PC-9 (cell line): ENCODE measurements at regions of chr2 and their contacts with region 1.

Region 1: DNA sequence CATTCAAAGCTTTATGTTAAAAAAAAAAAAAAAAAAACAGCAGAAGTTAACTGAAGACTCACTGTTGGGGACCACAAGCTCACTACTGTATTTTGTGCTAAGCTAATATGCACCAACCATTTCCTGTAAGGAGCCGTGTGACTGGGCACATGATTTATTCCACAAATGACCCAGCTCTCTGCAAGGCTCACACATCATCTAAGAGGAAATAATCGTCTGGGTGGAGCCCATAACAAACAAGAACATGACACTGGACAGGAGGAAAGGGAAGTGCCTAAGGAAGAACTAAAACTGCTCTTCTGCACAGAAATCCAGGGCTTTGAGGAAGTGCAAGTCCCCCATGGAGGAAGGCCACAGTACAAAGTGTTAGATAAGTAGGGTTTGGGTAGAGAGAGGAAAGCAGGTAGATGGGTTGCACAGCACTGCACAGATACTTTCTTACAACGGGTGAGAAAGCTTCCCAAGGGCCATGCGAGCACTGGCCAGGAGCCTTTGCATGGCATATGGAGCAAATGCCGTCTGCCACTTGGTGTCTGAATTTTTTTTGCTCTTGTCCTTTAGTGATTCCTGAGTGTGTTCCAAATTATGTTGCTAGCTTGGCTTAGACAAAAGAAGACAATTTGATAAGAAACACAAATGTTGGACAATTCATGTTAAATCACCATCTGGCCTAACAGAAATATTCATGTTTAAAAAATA is 24.4 kb downstream of the NFE2L2 start:
- DNase-seq: peak in 1 of 2 experiments; percentile 47
- H3K4me3 ChIP-seq: no peak overlapping the region
- H3K27ac ChIP-seq: peak overlapping the region; percentile 97
- H3K4me1 ChIP-seq: peaks cover 56% of the 10 kb centered on the region
- H3K27me3 ChIP-seq: no peaks in the 10 kb centered on the region
- CTCF ChIP-seq: no peak

Region 2: GRCh38 chr2:175929850-175930249 is 1310.2 kb before region 1 on chr2:
- CTCF ChIA-PET with region 1: no interaction called
- POLR2A ChIA-PET with region 1: no interaction called
- intact Hi-C with region 1: loop called (anchors 5 kb)
- DNase-seq: peak; percentile 14 to 39
- H3K4me3 ChIP-seq: no peak overlapping the region
- H3K27ac ChIP-seq: no peak overlapping the region
- H3K4me1 ChIP-seq: peaks cover 18% of the 10 kb centered on the region
- H3K27me3 ChIP-seq: no peaks in the 10 kb centered on the region
- CTCF ChIP-seq: no peak

Region 3: GRCh38 chr2:176126929-176127773 is 1112.9 kb before region 1 on chr2:
- CTCF ChIA-PET with region 1: interaction called, 12 read pairs
- POLR2A ChIA-PET with region 1: no interaction called
- intact Hi-C with region 1: no loop called
- DNase-seq: peak; percentile 43 to 67
- H3K4me3 ChIP-seq: 0 out of 2 replicates have a peak overlapping the region, but pooled peaks have one; percentile 3
- H3K27ac ChIP-seq: no peak overlapping the region
- H3K4me1 ChIP-seq: no peaks in the 10 kb centered on the region
- H3K27me3 ChIP-seq: peaks cover 52% of the 10 kb centered on the region
- CTCF ChIP-seq: peak; percentile 100

Region 4: GRCh38 chr2:176709149-176709951 is 530.7 kb before region 1 on chr2:
- CTCF ChIA-PET with region 1: no interaction called
- POLR2A ChIA-PET with region 1: no interaction called
- intact Hi-C with region 1: no loop called
- DNase-seq: no peak
- H3K4me3 ChIP-seq: no peak overlapping the region
- H3K27ac ChIP-seq: no peak overlapping the region
- H3K4me1 ChIP-seq: no peaks in the 10 kb centered on the region
- H3K27me3 ChIP-seq: peaks cover 43% of the 10 kb centered on the region
- CTCF ChIP-seq: no peak

Region 5: DNA sequence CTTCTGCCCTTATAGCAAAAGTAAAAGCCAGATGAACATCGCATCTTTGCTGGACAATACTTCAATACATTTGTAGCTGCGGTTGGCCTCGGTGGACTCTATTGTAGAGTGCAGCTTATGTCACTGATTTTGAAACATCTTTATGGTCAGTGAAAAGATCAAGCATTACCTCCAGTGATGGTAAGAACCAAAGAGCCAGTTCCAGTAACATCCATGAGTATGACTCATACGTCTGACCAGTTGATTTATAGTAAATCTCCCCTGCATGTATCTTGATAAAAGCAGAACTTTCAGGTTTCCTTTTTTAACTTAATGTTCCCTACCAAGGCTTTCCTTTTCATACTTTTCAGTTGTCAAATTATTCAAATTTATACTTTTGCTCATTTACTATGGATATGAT is 146.7 kb before region 1 on chr2:
- CTCF ChIA-PET with region 1: no interaction called
- POLR2A ChIA-PET with region 1: no interaction called
- intact Hi-C with region 1: no loop called
- DNase-seq: no peak
- H3K4me3 ChIP-seq: no peak overlapping the region
- H3K27ac ChIP-seq: no peak overlapping the region
- H3K4me1 ChIP-seq: no peaks in the 10 kb centered on the region
- H3K27me3 ChIP-seq: peaks cover 18% of the 10 kb centered on the region; the same call in 1 of the 2 replicates
- CTCF ChIP-seq: no peak

Region 6: DNA sequence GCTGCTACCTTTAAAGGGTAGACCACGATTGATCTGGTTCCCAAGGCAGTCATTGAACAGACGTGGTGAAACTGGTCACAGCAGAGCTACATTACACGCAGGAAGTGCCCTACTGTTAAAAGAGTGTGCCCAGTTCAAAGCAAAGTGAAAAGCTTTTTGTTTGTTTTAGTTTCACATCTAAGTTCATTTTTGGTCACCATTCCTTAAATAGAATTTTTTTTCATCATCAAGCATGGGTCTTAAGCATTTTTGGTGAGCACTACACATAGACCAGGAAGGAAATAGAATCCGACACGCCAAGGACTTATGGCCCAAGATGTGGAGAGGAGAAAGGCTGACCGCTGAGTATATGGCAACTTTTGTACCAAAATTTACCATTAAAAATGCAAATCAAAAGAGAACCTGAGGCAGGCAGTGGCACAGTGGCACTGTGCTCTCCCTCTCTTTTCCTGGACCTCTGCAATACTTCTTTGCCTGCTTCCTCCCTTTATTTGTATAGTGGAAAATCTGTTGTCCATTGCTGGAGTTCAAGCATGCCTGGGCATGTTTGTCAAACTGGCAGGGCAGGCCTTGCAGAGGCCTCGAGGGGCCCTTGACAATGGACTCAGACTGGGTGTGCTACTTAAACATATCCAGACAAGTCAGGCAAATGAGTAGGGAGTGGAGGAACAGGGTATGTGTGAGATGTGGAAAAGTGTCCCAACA is 70.1 kb before region 1 on chr2:
- CTCF ChIA-PET with region 1: interaction called, 22 read pairs
- POLR2A ChIA-PET with region 1: no interaction called
- intact Hi-C with region 1: loop called (anchors 1 kb)
- DNase-seq: peak; percentile 68 to 92
- H3K4me3 ChIP-seq: no peak overlapping the region
- H3K27ac ChIP-seq: no peak overlapping the region
- H3K4me1 ChIP-seq: peaks cover 72% of the 10 kb centered on the region
- H3K27me3 ChIP-seq: no peaks in the 10 kb centered on the region
- CTCF ChIP-seq: no peak

Region 7: DNA sequence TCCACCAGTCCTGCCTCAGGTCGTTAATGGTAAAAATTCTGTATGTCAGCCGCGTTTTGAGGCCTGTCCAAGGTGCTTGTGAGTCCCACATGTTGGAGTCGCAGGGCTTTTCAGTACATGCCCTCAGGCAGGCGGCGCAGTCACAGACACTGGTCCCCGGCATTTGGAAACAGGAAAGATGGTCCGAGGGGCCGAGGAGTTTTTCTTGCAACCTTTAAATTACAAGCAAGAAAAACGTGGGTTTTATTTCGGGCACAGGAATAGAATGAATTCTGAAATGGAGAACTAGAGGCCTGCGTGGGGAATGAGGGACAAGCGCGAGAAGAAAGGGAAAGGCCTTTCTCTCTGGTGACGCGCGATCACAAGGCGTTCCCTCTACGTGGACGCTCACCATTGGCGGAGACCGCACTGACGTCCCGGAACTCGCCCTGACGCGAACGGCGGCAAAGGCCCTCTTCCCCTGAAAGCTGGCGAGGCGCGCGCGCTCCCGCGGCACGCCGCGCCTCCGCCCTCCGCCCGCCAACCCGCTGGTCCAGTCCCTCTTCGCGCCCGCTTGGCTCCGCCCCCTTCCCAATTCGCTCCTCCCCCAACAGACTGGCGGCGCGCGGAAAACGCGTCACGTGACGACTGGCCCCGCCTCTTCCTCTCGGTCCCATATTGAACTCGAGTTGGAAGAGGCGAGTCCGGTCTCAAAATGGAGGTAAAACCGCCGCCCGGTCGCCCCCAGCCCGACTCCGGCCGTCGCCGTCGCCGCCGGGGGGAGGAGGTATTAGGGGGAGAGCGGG is 27.8 kb before region 1 on chr2 and contains the start of gene HNRNPA3:
- CTCF ChIA-PET with region 1: no interaction called
- POLR2A ChIA-PET with region 1: no interaction called
- intact Hi-C with region 1: loop called (anchors 1 kb)
- DNase-seq: peak; percentile 98 to 100
- H3K4me3 ChIP-seq: peak within 1 kb of the TSS; percentile 76
- H3K27ac ChIP-seq: peak within 1 kb of the TSS; percentile 97
- H3K4me1 ChIP-seq: peaks cover 30% of the 10 kb centered on the region
- H3K27me3 ChIP-seq: no peaks in the 10 kb centered on the region
- CTCF ChIP-seq: peak; percentile 27; the same call in 1 of the 2 replicates
- total RNA-seq, gene HNRNPA3: 245 and 290 TPM in 2 replicates

Region 8: DNA sequence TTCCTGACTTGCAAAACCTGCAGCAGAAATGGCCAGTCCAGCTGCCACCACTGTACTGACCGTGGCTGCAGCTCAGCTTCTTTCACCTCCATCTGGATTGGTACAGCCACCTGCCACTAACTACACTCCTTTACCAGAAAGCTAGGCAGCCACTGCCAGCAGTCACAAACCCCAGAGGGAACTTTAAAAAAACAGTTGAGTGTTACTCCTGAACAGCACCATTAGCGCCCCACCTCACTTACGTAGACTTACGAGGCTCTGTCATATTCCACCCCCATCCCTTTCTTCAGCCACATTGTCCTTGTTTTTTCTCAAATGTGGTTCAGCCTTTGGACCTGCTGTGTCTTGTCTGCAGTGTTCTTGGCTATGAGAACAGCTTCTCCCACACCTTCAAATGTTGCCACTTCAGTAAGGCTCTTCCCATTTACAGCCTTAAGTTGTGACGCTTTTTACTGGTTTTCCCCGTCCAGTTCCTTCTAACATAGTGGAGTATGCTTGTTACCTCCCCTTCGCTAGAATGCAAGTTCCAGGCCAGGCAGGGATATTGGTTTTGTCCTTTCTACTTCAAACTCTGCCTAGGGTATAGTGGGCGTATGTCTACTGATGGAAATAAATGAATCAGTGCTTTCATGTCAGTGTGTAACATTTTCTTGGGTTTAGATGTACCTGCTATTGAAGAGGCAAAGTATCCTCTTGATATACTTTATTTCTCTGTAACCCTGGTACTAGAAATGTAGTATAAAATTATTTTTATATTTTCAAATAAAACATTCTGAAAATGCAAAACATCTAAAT is 10.4 kb before region 1 on chr2:
- CTCF ChIA-PET with region 1: no interaction called
- POLR2A ChIA-PET with region 1: no interaction called
- intact Hi-C with region 1: loop called (anchors 1 kb)
- DNase-seq: no peak
- H3K4me3 ChIP-seq: no peak overlapping the region
- H3K27ac ChIP-seq: no peak overlapping the region
- H3K4me1 ChIP-seq: no peaks in the 10 kb centered on the region
- H3K27me3 ChIP-seq: no peaks in the 10 kb centered on the region
- CTCF ChIP-seq: no peak

Region 9: DNA sequence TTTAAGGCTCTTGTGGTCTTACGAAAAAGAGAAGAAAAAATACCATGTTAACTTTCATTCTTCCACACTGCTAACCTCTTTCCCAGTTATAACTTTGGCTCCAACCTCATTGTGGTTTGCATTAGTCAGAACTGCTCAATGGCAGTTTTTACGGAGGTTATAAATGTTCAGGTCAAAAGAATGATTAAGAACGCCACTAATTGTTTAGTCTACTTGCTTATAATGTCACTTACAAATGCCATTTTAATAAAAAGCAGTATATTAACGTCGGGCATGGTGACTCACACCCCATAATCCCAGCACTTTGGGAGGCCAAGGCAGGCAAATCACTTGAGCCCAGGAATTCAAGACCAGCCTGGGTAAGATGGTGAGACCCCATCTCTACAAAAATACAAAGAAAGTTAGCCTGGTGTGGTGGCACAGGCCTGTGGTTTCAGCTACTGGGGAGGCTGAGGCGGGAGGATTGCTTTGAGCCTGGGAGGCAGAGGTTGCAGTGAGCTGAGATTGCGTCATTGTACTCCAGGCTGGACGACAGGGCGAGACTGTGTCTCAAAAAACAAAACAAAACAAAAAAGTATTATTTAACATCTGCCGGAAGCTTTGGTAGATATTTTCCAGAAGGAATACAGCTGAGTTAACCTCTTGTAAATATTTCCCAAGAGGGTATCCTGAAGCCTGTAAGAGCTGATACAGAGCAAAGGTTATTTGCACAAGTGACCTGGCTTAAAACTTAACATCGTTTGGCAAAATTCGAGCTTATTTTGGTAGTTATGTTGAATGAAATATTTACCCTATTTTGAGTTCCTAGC is 157.6 kb after region 1 on chr2:
- CTCF ChIA-PET with region 1: no interaction called
- POLR2A ChIA-PET with region 1: interaction called, 10 read pairs
- intact Hi-C with region 1: loop called (anchors 2 kb)
- DNase-seq: peak; percentile 38 to 80
- H3K4me3 ChIP-seq: no peak overlapping the region
- H3K27ac ChIP-seq: peak overlapping the region; percentile 67
- H3K4me1 ChIP-seq: peaks cover 56% of the 10 kb centered on the region
- H3K27me3 ChIP-seq: no peaks in the 10 kb centered on the region
- CTCF ChIP-seq: no peak